ENCODE measurements at regions of chr5 and their contacts with region 1.

Region 1: DNA sequence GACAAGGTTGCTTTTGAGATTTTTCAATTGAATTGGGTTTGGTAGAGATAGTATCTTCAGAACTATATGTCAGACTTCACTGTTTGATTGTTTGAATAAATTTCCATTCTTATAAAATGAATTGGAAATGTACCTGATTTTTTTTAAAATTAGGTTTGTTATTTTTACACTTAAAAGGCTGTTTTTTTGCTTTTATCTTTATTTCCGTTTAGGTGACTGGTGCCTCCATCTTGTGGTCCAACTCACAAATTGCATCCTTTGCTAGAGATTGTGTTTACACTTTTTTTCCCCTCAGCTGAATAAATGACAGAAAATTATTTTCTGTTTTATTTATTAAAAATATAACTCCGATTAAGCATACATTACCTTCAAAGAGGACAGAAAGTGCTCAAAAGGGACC is 15.6 kb downstream of the NDUFAF2 start:
- H3K4me3 ChIP-seq: no peak overlapping the region
- H3K27ac ChIP-seq: no peak overlapping the region
- H3K4me1 ChIP-seq: no peaks in the 10 kb centered on the region
- CTCF ChIP-seq: no peak

Region 2: DNA sequence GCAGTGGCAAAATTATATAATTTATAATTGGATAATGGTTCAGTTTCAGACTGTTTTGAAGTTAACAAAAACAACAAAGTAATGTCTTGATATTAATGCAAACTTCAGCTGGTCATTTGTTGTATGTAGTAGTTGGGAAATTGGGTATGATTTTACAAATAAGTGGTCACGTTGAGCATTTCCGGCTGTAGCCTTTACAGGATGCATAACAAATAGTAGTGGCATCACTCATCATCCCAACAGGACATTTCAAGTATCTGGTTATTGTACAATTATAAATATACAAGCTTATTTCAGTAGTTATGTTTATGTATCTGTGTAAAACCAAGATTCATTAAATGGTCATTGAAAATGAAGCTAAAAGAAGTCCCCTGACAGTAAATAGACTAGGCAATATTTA is 128.8 kb after region 1 on chr5:
- CTCF ChIA-PET with region 1: no interaction called
- POLR2A ChIA-PET with region 1: no interaction called
- H3K4me3 ChIP-seq: no peak overlapping the region
- H3K27ac ChIP-seq: no peak overlapping the region
- H3K4me1 ChIP-seq: no peaks in the 10 kb centered on the region
- CTCF ChIP-seq: no peak

Region 3: GRCh38 chr5:61933787-61934626 is 973.4 kb after region 1 on chr5:
- CTCF ChIA-PET with region 1: interaction called, 11 read pairs
- POLR2A ChIA-PET with region 1: no interaction called
- H3K4me3 ChIP-seq: no peak overlapping the region
- H3K27ac ChIP-seq: no peak overlapping the region
- H3K4me1 ChIP-seq: peaks cover 2% of the 10 kb centered on the region; the same call in 1 of the 2 replicates
- CTCF ChIP-seq: peak; percentile 83